Naive thymus-derived CD4-positive, alpha-beta T cell (primary cell): ENCODE measurements at regions of chr7 and their contacts with region 1.

Region 1: DNA sequence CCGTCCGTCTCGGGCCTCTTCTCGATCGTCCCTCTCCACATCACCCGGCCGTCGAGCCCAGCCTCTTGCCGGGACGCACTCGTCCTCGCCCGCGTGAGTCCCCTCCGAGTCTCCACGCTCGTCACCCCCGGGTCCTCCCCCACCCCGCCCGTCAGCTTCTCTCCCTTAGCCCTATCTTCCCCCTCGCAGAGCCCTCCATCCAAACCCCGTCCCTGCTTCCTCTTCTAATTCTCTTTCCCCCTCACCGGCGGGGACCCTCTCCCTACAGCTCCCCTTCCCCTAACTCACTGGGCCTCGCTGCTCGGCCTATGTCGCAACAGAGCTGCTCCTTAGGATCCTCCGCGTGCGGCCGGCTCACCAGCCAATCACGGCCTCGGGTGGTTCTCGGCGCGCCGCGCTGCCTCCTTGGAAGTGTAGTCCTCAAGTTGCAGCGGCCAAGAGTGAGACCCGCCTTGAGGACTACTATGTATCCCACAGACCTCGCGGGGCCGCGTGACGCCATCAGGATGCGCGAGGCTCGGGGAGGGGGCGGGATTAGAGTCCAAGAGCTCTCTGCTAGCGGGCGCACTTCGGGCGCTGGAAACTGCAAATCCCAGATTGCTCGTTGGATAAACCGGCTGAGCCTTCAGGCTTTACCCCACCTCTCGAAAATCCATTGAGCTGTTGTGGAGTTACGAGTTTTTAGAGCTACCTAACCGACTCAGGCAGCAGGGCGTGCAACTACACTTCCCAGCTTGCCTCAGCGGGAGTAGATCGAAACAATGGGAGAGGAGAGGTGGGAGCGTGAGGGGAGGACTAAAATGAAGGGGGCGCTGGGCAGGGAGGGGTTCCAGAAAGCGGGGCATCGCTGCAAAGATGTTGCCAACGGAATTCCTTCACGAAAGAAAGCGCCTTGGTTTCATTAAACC is at the start of gene ABCF2:
- DNase-seq: peak; percentile 91 to 98 (median 97)
- ATAC-seq: peak; percentile 99
- H3K4me3 ChIP-seq: peak within 1 kb of the TSS; percentile 91
- H3K4me3 Mint-ChIP-seq: peak within 1 kb of the TSS; percentile 90 to 99 (median 97)
- H3K27ac ChIP-seq: peak within 1 kb of the TSS; percentile 84
- H3K27ac Mint-ChIP-seq: peak within 1 kb of the TSS; percentile 68 to 97 (median 95)
- H3K4me1 ChIP-seq: peaks cover 16 to 25% of the 10 kb centered on the region in 2 donors
- H3K4me1 Mint-ChIP-seq: peaks cover 31 to 55% (median 47%) of the 10 kb centered on the region in 7 donors
- H3K27me3 ChIP-seq: no peaks in the 10 kb centered on the region
- H3K27me3 Mint-ChIP-seq: peaks cover 0 to 6% (median 0%) of the 10 kb centered on the region in 5 donors
- total RNA-seq, gene ABCF2: 17.2 to 37.8 (median 27.7) TPM

Region 2: DNA sequence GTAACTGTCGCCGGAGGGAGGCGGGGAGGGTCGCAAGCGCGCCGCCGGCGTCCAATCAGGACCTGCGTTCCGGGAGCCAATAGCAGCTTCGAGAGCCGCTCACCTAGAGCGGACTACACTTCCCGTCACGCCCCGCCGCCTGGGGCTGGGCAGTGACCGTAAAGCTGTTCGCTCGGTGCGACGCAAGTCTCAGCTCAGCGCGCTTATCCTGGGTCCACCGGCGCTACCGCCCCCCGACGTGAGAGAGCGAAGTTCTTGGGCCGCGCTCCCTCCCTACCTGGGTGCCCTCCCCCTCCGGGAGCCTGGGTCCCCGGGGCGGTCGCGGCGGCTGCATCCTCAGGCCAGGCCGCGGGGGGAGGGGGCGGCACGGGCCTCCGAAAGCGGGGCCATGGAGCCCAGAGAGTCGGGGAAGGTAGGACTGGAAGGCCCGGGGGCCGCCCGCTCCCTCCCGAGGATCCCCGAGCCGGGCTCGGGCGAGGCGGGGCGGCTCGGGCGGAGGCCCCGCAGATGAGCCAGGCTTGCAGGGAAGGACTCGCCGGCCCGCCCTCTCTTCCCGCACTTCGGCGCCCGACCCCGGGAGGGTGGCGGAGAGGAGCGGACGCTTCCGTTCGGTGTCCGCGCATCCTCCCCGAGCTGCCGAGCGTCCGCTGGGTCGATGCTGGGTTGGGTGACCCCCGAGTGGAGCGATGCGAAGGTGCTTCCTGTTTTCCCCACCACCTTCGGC is 1388.7 kb before region 1 on chr7 and contains the start of gene ZNF862:
- CTCF ChIA-PET with region 1: no interaction called
- POLR2A ChIA-PET with region 1: no interaction called
- intact Hi-C with region 1: loop called (anchors 1 kb)
- DNase-seq: peak; percentile 84 to 96 (median 94)
- ATAC-seq: peak; percentile 99
- H3K4me3 ChIP-seq: peak within 1 kb of the TSS; percentile 67
- H3K4me3 Mint-ChIP-seq: peak within 1 kb of the TSS; percentile 85 to 97 (median 91)
- H3K27ac ChIP-seq: peak within 1 kb of the TSS; percentile 79
- H3K27ac Mint-ChIP-seq: peak within 1 kb of the TSS; percentile 77 to 96 (median 88)
- H3K4me1 ChIP-seq: peaks cover 12 to 22% of the 10 kb centered on the region in 2 donors
- H3K4me1 Mint-ChIP-seq: peaks cover 25 to 52% (median 48%) of the 10 kb centered on the region in 7 donors
- H3K27me3 ChIP-seq: no peaks in the 10 kb centered on the region
- H3K27me3 Mint-ChIP-seq: peaks cover 0 to 15% (median 3%) of the 10 kb centered on the region in 5 donors
- total RNA-seq, gene ZNF862: 36.9 to 112 (median 41.8) TPM

Region 3: DNA sequence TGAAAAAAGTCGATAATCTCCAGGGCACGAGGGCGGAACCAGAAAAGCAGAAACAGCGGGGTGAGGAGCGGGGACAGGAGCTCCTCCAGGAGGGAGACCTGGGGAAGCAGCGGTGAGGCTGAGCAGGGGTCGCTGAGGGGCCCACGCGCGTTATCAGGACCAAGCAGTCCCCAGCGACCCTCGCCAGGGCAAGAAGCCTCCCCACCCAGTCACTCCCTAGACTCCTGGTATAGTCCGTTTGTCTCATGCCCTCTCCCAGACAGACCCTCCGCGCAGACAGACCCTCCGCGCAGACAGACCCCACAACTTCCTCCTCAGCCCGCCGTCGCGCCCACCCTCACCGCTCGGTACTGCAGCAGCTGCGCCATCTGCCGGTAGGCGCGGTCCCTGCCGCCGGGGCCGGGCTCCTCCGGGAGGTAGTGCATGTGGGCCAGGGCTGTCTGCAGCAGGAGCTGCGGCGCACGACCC is 209.1 kb before region 1 on chr7:
- CTCF ChIA-PET with region 1: no interaction called
- POLR2A ChIA-PET with region 1: no interaction called
- intact Hi-C with region 1: loop called in 1 of 2 experiments (anchors 5 kb)
- DNase-seq: peak; percentile 67 to 87 (median 75)
- ATAC-seq: peak; percentile 68
- H3K4me3 ChIP-seq: peak overlapping the region; percentile 65
- H3K4me3 Mint-ChIP-seq: peak overlapping the region; percentile 79 to 94 (median 88)
- H3K27ac ChIP-seq: peak overlapping the region; percentile 97
- H3K27ac Mint-ChIP-seq: peak overlapping the region; percentile 82 to 100 (median 94)
- H3K4me1 ChIP-seq: peaks cover 30 to 55% of the 10 kb centered on the region in 2 donors
- H3K4me1 Mint-ChIP-seq: peaks cover 35 to 67% (median 53%) of the 10 kb centered on the region in 7 donors
- H3K27me3 ChIP-seq: no peaks in the 10 kb centered on the region
- H3K27me3 Mint-ChIP-seq: peaks cover 0 to 35% (median 0%) of the 10 kb centered on the region in 5 donors

Region 4: DNA sequence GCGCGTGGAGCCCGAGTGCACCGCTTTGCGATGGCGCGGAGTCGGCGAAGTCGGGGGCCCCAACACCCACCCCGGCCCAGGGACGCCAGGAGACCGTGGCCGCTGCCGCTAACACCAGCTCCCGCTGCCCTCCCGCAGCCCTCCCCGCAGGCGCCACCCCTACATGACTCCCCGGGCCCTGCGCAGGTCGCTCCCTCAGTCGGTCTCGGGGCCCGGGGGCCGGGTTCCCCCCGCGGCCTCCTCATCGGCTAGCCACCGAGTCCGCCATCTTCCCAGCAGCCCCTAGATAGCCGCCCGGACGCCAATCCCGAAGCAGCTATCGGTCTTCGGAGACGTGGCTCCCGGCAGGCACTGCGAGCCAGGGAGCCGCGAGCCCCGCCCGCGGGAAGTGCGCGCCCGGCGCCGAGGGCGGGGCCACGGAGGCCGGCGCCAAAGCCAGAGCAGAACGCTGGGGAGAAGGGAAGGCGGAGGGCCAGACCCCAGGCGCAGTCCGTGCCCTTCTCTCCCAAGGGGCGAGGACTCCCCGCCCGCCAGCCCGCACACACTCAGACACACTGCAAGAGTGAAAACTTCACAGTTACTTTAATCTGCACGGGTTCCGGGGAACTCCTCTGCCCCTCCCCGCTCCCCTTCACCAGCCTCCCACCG is 146.5 kb before region 1 on chr7 and contains the start of gene FASTK:
- CTCF ChIA-PET with region 1: no interaction called
- POLR2A ChIA-PET with region 1: no interaction called
- intact Hi-C with region 1: loop called (anchors 1 kb)
- DNase-seq: peak; percentile 79 to 89 (median 87)
- ATAC-seq: peak; percentile 85
- H3K4me3 ChIP-seq: peak within 1 kb of the TSS; percentile 86
- H3K4me3 Mint-ChIP-seq: peak within 1 kb of the TSS; percentile 87 to 97 (median 88)
- H3K27ac ChIP-seq: peak within 1 kb of the TSS; percentile 93
- H3K27ac Mint-ChIP-seq: peak within 1 kb of the TSS; percentile 72 to 92 (median 88)
- H3K4me1 ChIP-seq: peaks cover 41 to 44% of the 10 kb centered on the region in 2 donors
- H3K4me1 Mint-ChIP-seq: peaks cover 21 to 52% (median 39%) of the 10 kb centered on the region in 7 donors
- H3K27me3 ChIP-seq: no peaks in the 10 kb centered on the region
- H3K27me3 Mint-ChIP-seq: peaks cover 0 to 12% (median 0%) of the 10 kb centered on the region in 5 donors
- total RNA-seq, gene FASTK: 94.1 to 136 (median 101) TPM

Region 5: DNA sequence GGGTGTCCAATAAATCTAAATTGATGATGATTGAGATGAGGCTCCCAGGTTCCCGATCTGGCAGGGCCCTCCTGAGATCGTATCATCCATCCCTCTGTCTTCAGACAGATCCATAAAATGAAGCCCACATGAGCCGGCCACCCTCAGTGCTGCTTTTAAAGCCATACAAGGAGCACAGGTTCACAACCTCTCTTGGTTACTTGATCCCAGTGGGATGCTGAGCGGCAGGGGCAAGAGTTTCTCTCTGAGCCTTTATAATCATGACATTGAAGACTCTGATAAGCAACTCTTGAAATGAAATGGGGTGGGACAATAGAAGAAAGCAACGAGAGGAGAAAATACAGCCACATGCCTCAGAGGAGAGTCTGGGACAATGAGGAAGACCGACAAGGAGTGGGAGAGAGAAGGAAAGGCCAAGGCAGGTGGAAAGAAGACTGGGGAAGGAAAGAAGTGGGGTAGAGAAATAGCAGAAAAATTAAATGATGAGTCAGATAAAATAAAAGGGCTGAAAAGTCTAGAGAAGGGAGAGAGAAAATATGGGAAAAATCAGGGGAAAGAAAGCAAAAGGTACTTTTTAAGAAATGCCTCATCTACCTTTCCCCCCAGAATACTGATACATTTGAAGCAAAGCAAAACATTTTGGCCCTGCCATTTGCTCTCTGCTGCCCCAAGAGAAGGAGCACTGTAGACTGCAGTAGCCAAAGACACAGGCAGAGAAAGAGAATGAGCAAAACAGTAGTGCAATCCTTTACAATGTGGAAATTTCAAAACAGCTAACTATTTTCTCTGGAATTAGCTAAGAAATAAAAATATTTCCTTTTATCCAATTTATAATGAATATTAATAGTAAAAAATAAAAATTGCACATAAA is 74.3 kb before region 1 on chr7:
- CTCF ChIA-PET with region 1: no interaction called
- POLR2A ChIA-PET with region 1: no interaction called
- intact Hi-C with region 1: no loop called
- DNase-seq: no peak
- ATAC-seq: no peak
- H3K4me3 ChIP-seq: no peak overlapping the region
- H3K4me3 Mint-ChIP-seq: no peak overlapping the region
- H3K27ac ChIP-seq: no peak overlapping the region
- H3K27ac Mint-ChIP-seq: no peak overlapping the region
- H3K4me1 ChIP-seq: no peaks in the 10 kb centered on the region
- H3K4me1 Mint-ChIP-seq: no peaks in the 10 kb centered on the region
- H3K27me3 ChIP-seq: no peaks in the 10 kb centered on the region
- H3K27me3 Mint-ChIP-seq: peaks cover 24 to 39% (median 25%) of the 10 kb centered on the region in 5 donors

Region 6: GRCh38 chr7:151244196-151244840 is 17.2 kb after region 1 on chr7:
- CTCF ChIA-PET with region 1: interaction called, 4 read pairs
- POLR2A ChIA-PET with region 1: interaction called, 10 read pairs
- intact Hi-C with region 1: loop called (anchors 1 kb)
- DNase-seq: peak in 6 of 9 donors; percentile 44 to 63 (median 54)
- ATAC-seq: peak; percentile 52
- H3K4me3 ChIP-seq: peak overlapping the region; percentile 40
- H3K4me3 Mint-ChIP-seq: peak overlapping the region; percentile 71 to 93 (median 78)
- H3K27ac ChIP-seq: no peak overlapping the region
- H3K27ac Mint-ChIP-seq: peak overlapping the region in 6 of 9 donors; percentile 9 to 90 (median 68)
- H3K4me1 ChIP-seq: peaks cover 22 to 36% of the 10 kb centered on the region in 2 donors
- H3K4me1 Mint-ChIP-seq: peaks cover 27 to 53% (median 38%) of the 10 kb centered on the region in 7 donors
- H3K27me3 ChIP-seq: peaks cover 0 to under 1% of the 10 kb centered on the region in 2 donors
- H3K27me3 Mint-ChIP-seq: peaks cover 3 to 37% (median 21%) of the 10 kb centered on the region in 5 donors

Region 7: DNA sequence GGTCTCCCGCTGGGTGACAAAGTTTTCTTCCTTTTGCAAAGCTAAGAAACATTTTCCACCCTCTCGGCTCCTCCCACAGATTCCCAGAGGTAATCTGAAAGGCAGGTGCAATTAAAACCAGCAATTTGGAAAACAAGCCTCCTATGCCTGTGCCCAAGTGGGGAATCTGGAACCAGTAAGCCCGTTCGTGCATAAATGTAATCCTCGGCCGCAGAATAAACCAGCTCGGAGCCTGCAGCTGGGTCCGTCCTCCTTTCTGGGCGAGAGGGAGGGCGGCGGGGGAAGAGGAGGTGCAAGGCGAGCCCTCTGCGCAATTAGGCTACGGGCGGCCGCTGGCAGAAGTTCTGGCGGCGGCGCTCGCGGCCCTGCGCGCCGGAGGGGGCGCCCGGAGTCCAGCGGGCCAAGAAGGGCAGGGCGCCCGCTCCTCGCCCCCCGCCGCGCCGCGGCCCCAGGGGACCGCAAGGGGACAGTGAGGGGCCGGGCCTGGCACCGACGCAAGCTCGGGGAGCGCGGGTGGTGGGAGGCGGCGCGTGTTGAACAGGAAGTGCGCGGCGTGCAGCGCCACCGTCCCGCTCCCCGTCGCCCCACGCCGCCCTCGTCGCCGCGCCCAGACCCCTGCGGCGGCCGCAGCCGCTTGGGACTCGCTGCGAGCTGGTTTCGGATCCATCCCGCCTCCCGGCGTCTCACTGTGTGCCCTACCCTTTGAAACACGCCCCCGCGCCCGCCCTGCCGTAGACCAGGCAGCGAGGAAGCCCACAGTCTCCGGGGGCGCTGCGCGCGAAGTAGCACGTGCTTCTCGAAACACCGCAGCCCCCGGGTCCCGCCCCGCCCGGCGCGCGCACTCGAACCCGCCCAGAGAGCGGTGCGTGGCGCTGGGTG is 650.0 kb after region 1 on chr7 and contains the start of gene PRKAG2:
- CTCF ChIA-PET with region 1: no interaction called
- POLR2A ChIA-PET with region 1: no interaction called
- intact Hi-C with region 1: loop called in 1 of 2 experiments (anchors 2 kb)
- DNase-seq: peak; percentile 58 to 81 (median 76)
- ATAC-seq: peak; percentile 65
- H3K4me3 ChIP-seq: peak within 1 kb of the TSS; percentile 99
- H3K4me3 Mint-ChIP-seq: peak within 1 kb of the TSS; percentile 93 to 98 (median 96)
- H3K27ac ChIP-seq: peak within 1 kb of the TSS; percentile 87
- H3K27ac Mint-ChIP-seq: peak within 1 kb of the TSS; percentile 84 to 96 (median 91)
- H3K4me1 ChIP-seq: peaks cover 7 to 15% of the 10 kb centered on the region in 2 donors
- H3K4me1 Mint-ChIP-seq: peaks cover 6 to 33% (median 20%) of the 10 kb centered on the region in 7 donors
- H3K27me3 ChIP-seq: no peaks in the 10 kb centered on the region
- H3K27me3 Mint-ChIP-seq: peaks cover 0 to 41% (median 0%) of the 10 kb centered on the region in 5 donors
- total RNA-seq, gene PRKAG2: 15.0 to 74.4 (median 66.1) TPM